ENCODE measurements at regions of chr6 and their contacts with region 1.

Region 1: GRCh38 chr6:37791156-37791919 is 28.2 kb upstream of the ZFAND3 start:
- DNase-seq: peak; percentile 93
- ATAC-seq: peak; percentile 99
- H3K4me3 ChIP-seq: 0 out of 4 replicates have a peak overlapping the region, but pooled peaks of 1 of the 2 experiments have one; percentile 19
- H3K27ac ChIP-seq: no peak overlapping the region
- H3K4me1 ChIP-seq: peaks cover 7 to 38% of the 10 kb centered on the region in 2 experiments
- H3K27me3 ChIP-seq: no peaks in the 10 kb centered on the region
- CTCF ChIP-seq: peak; percentile 81 to 97 (median 94)
- POLR2A ChIP-seq: no peak
- RAD21 ChIP-seq: peak; percentile 97

Region 2: GRCh38 chr6:37483917-37484785 is 307.2 kb before region 1 on chr6:
- CTCF ChIA-PET with region 1: no interaction called
- POLR2A ChIA-PET with region 1: no interaction called
- RAD21 ChIA-PET with region 1: no interaction called
- intact Hi-C with region 1: loop called (anchors 2 kb)
- DNase-seq: no peak
- ATAC-seq: peak; percentile 92
- H3K4me3 ChIP-seq: no peak overlapping the region
- H3K27ac ChIP-seq: no peak overlapping the region
- H3K4me1 ChIP-seq: no peaks in the 10 kb centered on the region
- H3K27me3 ChIP-seq: no peaks in the 10 kb centered on the region
- CTCF ChIP-seq: peak; percentile 69 to 90 (median 75); a peak in 5 of 6 replicates
- POLR2A ChIP-seq: no peak
- RAD21 ChIP-seq: peak; percentile 90

Region 3: GRCh38 chr6:37860226-37860839 is 69.0 kb after region 1 on chr6:
- CTCF ChIA-PET with region 1: interaction called, 4 read pairs
- POLR2A ChIA-PET with region 1: no interaction called
- RAD21 ChIA-PET with region 1: no interaction called
- intact Hi-C with region 1: loop called (anchors 2 kb)
- DNase-seq: peak; percentile 12
- ATAC-seq: peak; percentile 58; the same call in 1 of the 2 replicates
- H3K4me3 ChIP-seq: no peak overlapping the region
- H3K27ac ChIP-seq: no peak overlapping the region
- H3K4me1 ChIP-seq: no peaks in the 10 kb centered on the region
- H3K27me3 ChIP-seq: no peaks in the 10 kb centered on the region
- CTCF ChIP-seq: peak; percentile 60 to 74 (median 69); a peak in 5 of 6 replicates
- POLR2A ChIP-seq: no peak
- RAD21 ChIP-seq: peak; percentile 54